ENCODE measurements at regions of chr20 and their contacts with region 1.

Region 1: GRCh38 chr20:38863024-38863851 is 57.7 kb downstream of the PPP1R16B start:
- DNase-seq: peak; percentile 30

Region 2: GRCh38 chr20:38779247-38780097 is 83.8 kb before region 1 on chr20:
- intact Hi-C with region 1: no loop called
- DNase-seq: no peak

Region 3: DNA sequence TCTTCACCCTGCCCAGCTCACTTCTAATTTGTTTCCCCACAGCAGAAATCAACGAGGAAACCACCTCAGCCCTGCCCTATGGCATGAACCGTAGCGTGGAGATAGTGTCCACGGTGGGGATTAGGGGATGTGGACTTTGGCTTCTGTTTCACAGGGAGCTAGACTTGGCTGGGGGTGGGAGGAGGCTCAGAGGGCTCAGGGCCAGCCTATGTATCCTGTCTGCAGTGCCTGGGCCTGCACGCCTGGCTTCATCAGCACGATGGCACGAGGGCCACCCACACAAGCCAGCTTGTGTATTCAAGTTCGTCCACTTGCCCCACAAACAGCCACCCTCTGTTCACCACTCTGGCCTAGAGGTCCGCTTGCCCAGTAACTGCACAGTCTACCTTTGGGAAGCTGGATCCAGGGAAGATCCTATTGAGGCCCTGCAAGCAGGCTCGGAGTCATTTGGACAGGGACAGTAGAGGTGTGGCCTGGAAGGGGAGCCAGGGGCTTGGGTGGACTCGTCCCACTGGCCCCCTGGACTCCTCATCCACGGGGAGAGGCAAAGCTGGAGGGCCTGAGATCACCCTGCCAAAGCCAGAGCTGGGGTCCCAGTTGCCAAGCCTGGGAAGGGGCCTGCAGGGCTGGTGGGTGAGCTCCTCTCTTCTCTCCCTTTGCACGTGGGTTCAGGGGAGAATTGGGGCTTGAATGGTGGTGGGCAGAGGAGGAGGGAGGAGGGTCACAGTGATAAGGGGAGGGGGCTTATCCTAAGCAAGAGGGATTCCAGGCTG is 25.0 kb after region 1 on chr20:
- intact Hi-C with region 1: loop called in 1 of 2 experiments (anchors 1 kb)
- DNase-seq: no peak

Measured in posterior vena cava (tissue), 2 donors.